ENCODE measurements at regions of chr14 and their contacts with region 1.

Region 1: GRCh38 chr14:53790731-53791515 is 165.7 kb downstream of the BMP4 start:
- DNase-seq: no peak
- ATAC-seq: no peak

Region 2: GRCh38 chr14:51908086-51908485 is 1882.8 kb before region 1 on chr14:
- intact Hi-C with region 1: no loop called
- DNase-seq: no peak
- ATAC-seq: no peak

Region 3: DNA sequence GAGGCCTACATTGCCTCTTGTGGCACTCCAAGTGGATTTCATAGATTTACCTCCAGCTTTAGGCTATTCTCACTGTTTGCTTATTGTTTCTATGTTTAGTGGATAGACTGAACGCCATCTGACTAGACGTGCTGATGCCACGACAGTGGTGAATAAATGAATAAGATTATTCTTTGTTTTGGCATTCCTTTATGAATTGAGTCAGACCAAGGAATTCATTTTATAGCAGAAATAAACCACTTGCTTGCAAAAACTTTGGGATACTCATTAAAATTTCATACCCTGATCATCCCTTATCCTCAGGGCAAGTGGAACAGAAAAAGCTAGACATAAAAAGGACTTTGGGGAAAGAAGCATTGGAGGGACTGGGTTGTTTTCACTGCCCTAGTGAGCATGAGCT is 768.3 kb before region 1 on chr14:
- intact Hi-C with region 1: no loop called
- DNase-seq: no peak
- ATAC-seq: no peak

Region 4: DNA sequence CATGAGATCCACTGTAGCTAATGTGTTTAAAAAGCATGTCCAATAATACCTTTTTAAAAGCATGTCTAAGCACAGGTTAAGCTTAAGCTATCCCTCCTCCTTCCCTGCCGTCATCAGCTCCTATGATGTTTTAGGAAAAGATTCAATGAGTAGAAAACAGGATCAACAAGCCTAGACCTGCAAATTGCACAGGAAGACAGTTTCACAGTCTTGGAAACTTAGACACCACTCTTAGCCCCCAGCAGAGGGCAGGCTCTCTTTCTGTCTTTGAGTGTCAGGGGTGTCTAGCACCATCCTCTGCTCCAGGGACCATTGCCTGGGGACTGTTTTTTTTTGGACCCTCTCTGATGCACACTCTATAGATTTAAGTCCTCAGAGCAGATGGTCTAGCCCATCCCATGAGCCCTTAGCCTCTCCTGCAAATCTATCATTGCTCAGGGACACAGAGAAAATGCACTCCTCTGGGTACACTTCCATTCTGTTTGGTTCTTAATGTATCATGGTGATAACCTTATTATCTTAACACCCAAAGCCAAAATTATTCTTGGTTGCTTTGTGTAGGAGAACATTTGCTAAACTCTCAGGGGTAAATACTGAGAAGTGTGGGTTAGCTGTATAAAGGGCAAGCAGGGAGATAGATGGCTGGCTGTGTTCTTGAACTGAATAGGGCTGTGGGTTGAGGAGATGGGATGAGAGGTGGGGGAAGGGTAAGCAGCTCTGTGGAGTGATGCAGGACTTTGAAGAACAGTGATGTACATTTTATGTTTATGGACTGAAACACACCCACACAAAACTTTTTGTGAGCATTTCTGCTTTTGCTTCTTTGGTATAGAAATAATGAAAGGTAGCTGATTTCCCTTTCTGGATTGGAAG is 377.9 kb before region 1 on chr14:
- intact Hi-C with region 1: no loop called
- DNase-seq: no peak
- ATAC-seq: peak; percentile 46

Region 5: DNA sequence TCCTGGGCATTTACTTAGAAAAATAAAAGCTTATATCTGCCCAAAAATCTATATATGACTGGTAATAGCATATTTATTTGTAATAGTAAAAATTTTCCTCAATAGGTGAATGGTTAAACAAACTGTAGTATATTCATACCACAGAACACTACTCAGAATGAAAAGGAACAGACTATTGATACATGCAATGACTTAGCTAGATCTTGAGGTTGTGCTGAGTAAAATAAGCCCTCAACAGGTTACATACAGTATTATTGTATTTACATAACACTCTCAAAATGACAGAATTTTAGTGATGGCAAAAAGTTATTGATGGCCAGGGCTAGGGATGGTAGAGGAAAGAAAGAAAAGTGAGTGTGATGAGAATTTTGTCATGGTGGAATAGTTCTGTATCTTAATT is 12.7 kb before region 1 on chr14:
- intact Hi-C with region 1: loop called (anchors 1 kb)
- DNase-seq: no peak
- ATAC-seq: no peak

Region 6: DNA sequence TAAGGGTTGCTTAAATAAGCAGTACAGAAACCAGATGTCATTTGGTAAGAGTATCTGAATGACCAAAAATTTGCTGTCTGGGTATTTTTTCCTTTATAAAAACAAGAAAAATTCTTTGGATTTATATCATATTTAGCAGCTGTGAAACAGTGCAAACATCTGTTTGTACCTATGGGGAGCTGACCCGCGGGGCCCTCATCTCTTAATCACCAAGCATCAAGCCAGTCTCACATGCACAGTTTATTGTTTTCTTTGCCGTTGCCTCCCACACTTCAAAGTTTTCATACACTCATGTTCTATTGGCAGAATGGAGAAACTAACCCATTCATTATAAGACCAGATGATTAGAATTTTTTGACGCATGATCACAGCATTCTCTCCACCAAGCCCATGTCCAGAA is 23.5 kb after region 1 on chr14:
- intact Hi-C with region 1: no loop called
- DNase-seq: no peak
- ATAC-seq: peak; percentile 55